Right cardiac atrium (tissue), 5 donors: ENCODE measurements at regions of chr7 and their contacts with region 1.

Region 1: DNA sequence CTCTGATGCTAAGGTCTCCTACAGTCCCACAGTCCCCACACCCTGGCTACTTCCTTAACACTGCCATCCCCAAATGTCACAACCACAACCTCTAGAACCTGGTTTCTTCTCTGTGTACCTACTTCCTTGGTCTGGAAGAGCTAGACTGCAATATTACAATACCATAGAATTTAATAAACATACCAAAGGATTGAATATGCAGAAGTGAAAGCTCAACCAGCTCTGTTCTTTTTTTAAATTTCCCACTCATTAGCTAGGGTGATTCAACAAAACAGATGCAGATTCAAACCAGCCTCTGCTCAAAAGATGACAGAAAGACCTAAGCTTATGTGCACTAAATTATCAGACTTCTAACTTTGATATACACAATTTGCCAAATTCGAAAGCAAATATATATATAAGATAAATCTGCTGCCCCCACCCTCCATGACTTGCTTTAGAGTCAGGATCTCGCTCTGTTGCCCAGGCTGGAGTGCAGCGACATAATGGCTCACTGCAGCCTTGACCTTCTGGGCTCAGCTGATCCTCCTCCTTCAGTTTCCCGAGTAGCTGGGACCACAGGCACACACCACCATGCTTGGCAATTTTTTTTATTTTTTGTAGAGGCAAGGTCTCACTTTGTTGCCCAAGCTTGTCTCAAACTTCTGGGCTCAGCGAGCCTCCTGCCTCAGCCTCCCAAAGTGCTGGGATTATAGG is 212.6 kb downstream of the CHCHD3 start:
- DNase-seq: no peak
- ATAC-seq: no peak
- H3K4me3 ChIP-seq: no peak overlapping the region
- H3K27ac ChIP-seq: no peak overlapping the region
- H3K4me1 ChIP-seq: peaks cover 10% of the 10 kb centered on the region
- H3K27me3 ChIP-seq: no peaks in the 10 kb centered on the region

Region 2: GRCh38 chr7:132891554-132891953 is 22.2 kb after region 1 on chr7:
- intact Hi-C with region 1: loop called in 1 of 4 experiments (anchors 2 kb)
- DNase-seq: no peak
- ATAC-seq: no peak
- H3K4me3 ChIP-seq: no peak overlapping the region
- H3K27ac ChIP-seq: no peak overlapping the region
- H3K4me1 ChIP-seq: peaks cover 2% of the 10 kb centered on the region
- H3K27me3 ChIP-seq: no peaks in the 10 kb centered on the region